ENCODE measurements at regions of chr11 and their contacts with region 1.

Region 1: DNA sequence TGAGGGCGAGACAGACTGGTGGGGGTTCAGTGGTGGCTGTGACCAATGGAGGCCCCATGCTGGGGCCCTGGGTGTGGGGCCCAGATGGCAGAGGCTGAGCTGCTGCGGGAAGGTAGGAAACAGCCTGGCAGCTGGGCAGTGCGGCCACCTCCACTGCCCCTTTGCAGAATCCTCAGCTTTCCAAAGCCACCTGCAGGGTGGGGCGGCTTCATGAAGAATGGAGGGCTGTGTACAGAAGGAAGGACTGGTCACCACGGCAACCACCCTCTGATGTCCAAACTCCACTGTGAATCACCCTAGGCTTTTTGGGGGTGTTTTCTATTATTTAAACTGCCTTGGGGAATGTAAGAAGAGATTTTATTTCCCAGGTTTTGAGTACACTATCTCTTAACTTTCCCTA is 166.3 kb upstream of the NAV2 start:
- ATAC-seq: peak; percentile 29 to 97 (median 60)
- H3K4me3 ChIP-seq: no peak overlapping the region
- H3K27ac ChIP-seq: no peak overlapping the region
- H3K4me1 ChIP-seq: peaks cover 22 to 25% of the 10 kb centered on the region in 2 donors

Region 2: DNA sequence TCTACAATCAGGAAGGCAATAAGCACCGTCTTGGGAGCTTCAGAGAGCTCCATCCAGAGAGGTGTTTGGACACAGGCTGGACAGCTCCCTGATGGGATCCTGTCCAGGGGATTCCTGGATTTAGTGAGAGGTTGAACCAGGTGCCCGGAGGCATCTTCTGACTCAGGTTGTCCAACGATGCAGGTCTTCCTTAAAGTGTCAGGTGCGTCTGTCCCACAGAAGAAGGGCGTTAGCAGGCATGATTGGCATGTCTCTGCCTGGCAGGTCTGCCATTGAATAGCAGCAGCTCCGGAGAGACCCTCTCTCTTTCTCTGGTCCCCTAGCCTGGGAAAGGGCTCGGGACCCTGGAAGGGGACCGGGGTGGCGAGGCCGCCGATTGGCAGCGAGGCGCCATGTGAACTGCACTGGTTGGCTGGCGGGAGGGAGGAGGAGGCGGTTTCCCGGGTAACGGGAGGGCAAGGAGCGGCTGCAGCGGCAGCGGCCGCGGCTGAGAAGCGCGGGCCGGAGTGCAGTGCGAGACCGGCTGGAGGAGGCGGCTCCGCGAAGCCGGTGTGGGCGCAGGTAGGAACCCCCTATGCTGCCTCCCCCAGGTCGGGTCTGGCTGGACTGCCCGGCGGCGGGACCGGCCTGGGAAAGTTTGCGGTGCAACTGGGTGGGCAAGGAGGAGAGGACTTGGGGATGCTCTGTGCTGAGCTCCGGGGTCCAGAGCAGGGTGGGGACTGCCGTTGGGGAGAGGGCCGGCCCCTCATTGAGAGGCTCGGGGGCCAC is 201.4 kb before region 1 on chr11:
- in situ Hi-C with region 1: loop called in 2 of 9 experiments (anchors 10 to 25 kb)
- ATAC-seq: peak; percentile 70 to 87 (median 78)
- H3K4me3 ChIP-seq: peak overlapping the region; percentile 42 to 59 (median 45)
- H3K27ac ChIP-seq: no peak overlapping the region
- H3K4me1 ChIP-seq: peaks cover 27 to 33% of the 10 kb centered on the region in 2 donors

Region 3: GRCh38 chr11:20031155-20032109 is 485.1 kb after region 1 on chr11:
- in situ Hi-C with region 1: no loop called
- ATAC-seq: peak in 3 of 8 experiments; percentile 36 to 74 (median 49)
- H3K4me3 ChIP-seq: no peak overlapping the region
- H3K27ac ChIP-seq: no peak overlapping the region
- H3K4me1 ChIP-seq: peaks cover 17 to 22% of the 10 kb centered on the region in 2 donors

Measured in motor neuron (in vitro differentiated cells).